H1 (cell line): ENCODE measurements at regions of chr3 and their contacts with region 1.

Region 1: DNA sequence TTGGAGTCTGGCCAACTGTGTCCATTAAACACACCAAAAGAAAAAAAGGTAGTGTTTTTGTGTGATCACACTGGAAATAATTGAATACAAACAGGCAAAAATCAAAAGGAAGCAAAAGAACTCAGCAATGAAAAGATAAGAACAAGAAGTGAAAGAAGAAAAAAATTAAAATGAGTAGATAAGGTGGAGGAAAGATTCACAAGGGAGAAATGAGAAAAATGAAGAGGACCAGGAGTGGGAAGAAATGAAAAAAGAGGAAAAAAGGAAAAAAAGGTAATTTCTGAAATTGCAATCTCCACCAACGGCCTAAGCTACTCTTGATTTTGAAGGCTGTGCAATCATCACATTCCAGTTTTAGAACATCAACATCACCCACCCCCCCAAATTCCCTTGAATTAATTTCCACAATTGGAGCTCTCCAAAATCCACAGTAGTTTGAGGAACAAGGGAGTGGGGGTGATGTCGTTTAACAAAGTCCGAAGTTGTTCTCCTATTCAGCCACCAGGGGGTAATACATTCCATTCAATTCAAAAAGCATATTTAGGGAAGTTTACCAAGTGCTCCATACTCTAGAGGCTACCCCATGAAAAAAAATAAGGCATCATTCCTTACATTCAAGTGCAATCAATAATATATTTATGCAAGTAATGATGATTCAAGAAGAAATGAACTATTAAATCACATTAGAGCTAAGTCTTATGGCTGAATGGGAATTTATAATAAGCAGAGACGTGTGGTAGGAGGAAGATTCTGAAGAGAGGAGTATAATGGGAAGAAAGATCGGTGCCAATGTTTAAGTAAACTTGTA is 37.4 kb downstream of the ZNF860 start:
- DNase-seq: no peak
- H3K4me3 ChIP-seq: no peak overlapping the region
- H3K27ac ChIP-seq: no peak overlapping the region
- H3K4me1 ChIP-seq: no peaks in the 10 kb centered on the region
- H3K27me3 ChIP-seq: no peaks in the 10 kb centered on the region
- CTCF ChIP-seq: peak in 2 of 3 experiments; percentile 49 to 61; a peak in 2 of 4 replicates
- EP300 ChIP-seq: no peak
- POLR2A ChIP-seq: no peak
- RAD21 ChIP-seq: peak; percentile 75 to 80

Region 2: GRCh38 chr3:32037929-32038267 is 18.9 kb after region 1 on chr3:
- CTCF ChIA-PET with region 1: interaction called, 17 read pairs
- POLR2A ChIA-PET with region 1: no interaction called
- DNase-seq: no peak
- H3K4me3 ChIP-seq: no peak overlapping the region
- H3K27ac ChIP-seq: no peak overlapping the region
- H3K4me1 ChIP-seq: no peaks in the 10 kb centered on the region
- H3K27me3 ChIP-seq: no peaks in the 10 kb centered on the region
- CTCF ChIP-seq: no peak
- EP300 ChIP-seq: no peak
- POLR2A ChIP-seq: no peak
- RAD21 ChIP-seq: no peak

Region 3: GRCh38 chr3:32109256-32109655 is 90.3 kb after region 1 on chr3:
- CTCF ChIA-PET with region 1: interaction called, 17 read pairs
- POLR2A ChIA-PET with region 1: no interaction called
- DNase-seq: no peak
- H3K4me3 ChIP-seq: no peak overlapping the region
- H3K27ac ChIP-seq: no peak overlapping the region
- H3K4me1 ChIP-seq: peaks cover 0 to 5% (median 3%) of the 10 kb centered on the region in 4 experiments; a peak in 5 of 7 replicates
- H3K27me3 ChIP-seq: peaks cover 0 to 16% (median 14%) of the 10 kb centered on the region in 4 experiments; a peak in 6 of 7 replicates
- CTCF ChIP-seq: peak; percentile 21 to 34 (median 29); a peak in 3 of 4 replicates
- EP300 ChIP-seq: no peak
- POLR2A ChIP-seq: no peak
- RAD21 ChIP-seq: peak; percentile 40 to 61

Region 4: GRCh38 chr3:32136703-32137102 is 117.7 kb after region 1 on chr3:
- CTCF ChIA-PET with region 1: interaction called, 11 read pairs
- POLR2A ChIA-PET with region 1: no interaction called
- DNase-seq: no peak
- H3K4me3 ChIP-seq: no peak overlapping the region
- H3K27ac ChIP-seq: no peak overlapping the region
- H3K4me1 ChIP-seq: no peaks in the 10 kb centered on the region
- H3K27me3 ChIP-seq: no peaks in the 10 kb centered on the region
- CTCF ChIP-seq: no peak
- EP300 ChIP-seq: no peak
- POLR2A ChIP-seq: no peak
- RAD21 ChIP-seq: no peak

Region 5: GRCh38 chr3:32154205-32154579 is 135.2 kb after region 1 on chr3:
- CTCF ChIA-PET with region 1: interaction called, 33 read pairs
- POLR2A ChIA-PET with region 1: no interaction called
- DNase-seq: no peak
- H3K4me3 ChIP-seq: no peak overlapping the region
- H3K27ac ChIP-seq: no peak overlapping the region
- H3K4me1 ChIP-seq: no peaks in the 10 kb centered on the region; a peak in 1 of 7 replicates
- H3K27me3 ChIP-seq: no peaks in the 10 kb centered on the region
- CTCF ChIP-seq: peak; percentile 50 to 71 (median 56)
- EP300 ChIP-seq: no peak
- POLR2A ChIP-seq: no peak
- RAD21 ChIP-seq: peak; percentile 76 to 79